Transverse colon (tissue), 4 donors: ENCODE measurements at regions of chr14 and their contacts with region 1.

Region 1: DNA sequence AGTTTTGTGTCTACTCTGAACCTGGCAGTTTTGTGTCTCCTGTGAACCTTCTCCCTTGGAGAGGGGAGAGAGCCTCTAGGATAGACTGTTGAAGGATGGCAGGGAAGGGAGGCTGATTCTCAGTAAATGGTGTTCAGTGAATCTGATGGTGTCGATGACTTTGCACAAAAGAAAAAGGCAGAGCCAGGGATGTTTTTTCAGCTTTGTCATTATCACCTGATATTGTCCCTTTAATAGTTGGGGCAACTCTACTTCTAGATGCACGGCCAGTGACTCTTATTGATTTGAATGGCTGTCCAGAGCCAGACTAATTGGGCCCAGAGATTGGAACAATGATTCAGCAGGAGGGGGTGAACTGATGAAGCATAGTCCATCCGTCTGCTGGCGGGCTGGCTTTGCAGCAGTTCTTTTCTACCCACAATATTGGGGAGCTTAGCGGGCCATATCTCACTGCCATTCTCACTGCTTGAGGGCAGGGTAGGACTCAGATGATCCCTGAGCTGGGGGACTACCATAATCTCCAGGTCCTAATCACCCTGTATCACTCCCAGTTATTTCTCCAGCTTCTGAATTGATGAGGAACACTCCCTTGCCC is 93.1 kb downstream of the ADCK1 start:
- DNase-seq: no peak
- H3K4me3 ChIP-seq: no peak overlapping the region
- H3K27ac ChIP-seq: no peak overlapping the region
- H3K4me1 ChIP-seq: no peaks in the 10 kb centered on the region
- H3K27me3 ChIP-seq: no peaks in the 10 kb centered on the region
- CTCF ChIP-seq: no peak
- EP300 ChIP-seq: no peak
- POLR2A ChIP-seq: no peak

Region 2: DNA sequence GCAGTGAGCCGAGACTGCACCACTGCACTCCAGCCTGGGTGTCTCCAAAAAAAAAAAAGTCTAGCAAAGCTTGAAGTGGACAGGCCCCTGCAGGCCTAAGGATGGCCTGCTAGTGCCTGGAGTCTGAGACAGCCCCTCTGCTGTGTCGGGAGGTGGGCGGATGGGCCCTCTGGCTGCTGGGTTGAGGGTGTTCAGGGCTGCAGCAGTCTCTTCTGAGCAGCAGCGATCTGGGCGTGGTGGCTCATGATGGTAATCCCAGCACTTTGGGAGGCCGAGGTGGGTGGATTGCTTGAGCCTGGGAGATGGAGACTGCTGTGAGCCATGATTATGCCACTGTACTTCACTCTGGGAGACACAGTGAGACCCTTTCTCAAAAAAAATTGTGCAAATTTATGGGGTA is 36.0 kb before region 1 on chr14:
- in situ Hi-C with region 1: no loop called
- intact Hi-C with region 1: loop called (anchors 1 kb)
- DNase-seq: no peak
- H3K4me3 ChIP-seq: no peak overlapping the region
- H3K27ac ChIP-seq: no peak overlapping the region
- H3K4me1 ChIP-seq: no peaks in the 10 kb centered on the region
- H3K27me3 ChIP-seq: no peaks in the 10 kb centered on the region
- CTCF ChIP-seq: no peak
- EP300 ChIP-seq: no peak
- POLR2A ChIP-seq: no peak